Right ventricle myocardium superior (tissue), 1 donor: ENCODE measurements at regions of chr1 and their contacts with region 1.

Region 1: GRCh38 chr1:92749024-92749634 is 35.8 kb downstream of the EVI5 start:
- DNase-seq: no peak
- ATAC-seq: peak; percentile 56

Region 2: DNA sequence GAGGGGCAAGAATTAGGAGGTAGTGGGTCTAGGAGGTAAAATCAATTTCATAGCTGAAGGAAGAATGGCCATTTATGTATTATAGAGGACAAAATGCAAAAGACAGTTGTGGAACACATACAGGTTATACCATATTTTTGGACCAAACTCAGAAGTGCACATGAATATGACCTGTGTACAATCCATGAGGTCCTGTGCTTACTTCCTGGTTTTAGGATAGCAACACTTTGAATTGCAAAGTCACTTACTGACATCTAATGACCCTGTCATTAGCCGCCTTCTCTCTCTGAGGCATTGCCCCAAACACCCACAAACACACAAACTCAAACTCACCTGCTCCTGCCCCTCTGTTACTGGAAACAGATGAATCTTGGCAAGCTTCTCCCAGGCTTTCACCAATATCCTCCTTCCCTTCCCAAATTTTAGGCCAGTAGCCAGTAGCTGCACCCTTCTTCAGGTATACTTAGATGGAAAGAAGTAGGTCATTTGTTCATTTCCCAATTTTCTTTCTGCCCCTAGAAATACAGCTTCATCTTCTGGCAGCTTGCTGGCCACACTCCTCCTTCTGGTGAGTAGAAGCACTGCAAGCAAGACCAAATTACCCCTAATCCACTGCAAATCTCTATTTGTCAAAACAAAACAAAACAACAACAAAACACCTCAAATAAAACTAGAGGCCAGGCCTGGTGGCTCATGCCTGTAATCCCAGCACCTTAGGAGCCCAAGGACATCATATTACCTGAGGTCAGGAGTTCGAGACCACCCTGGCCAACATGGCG is 69.0 kb after region 1 on chr1:
- intact Hi-C with region 1: loop called (anchors 10 kb)
- DNase-seq: no peak
- ATAC-seq: peak; percentile 67